CD4-positive, alpha-beta memory T cell (primary cell): ENCODE measurements at regions of chr14 and their contacts with region 1.

Region 1: GRCh38 chr14:104665657-104666522 is 23.5 kb upstream of the INF2 start:
- DNase-seq: peak; percentile 47 to 65 (median 59)
- H3K4me3 ChIP-seq: no peak overlapping the region
- H3K4me3 Mint-ChIP-seq: peak overlapping the region in 7 of 8 donors; percentile 29 to 76 (median 49)
- H3K27ac ChIP-seq: no peak overlapping the region
- H3K27ac Mint-ChIP-seq: peak overlapping the region in 4 of 7 donors; percentile 41 to 89 (median 63)
- H3K4me1 ChIP-seq: peaks cover 31% of the 10 kb centered on the region
- H3K4me1 Mint-ChIP-seq: peaks cover 16 to 36% (median 22%) of the 10 kb centered on the region in 4 donors
- H3K27me3 ChIP-seq: peaks cover 5% of the 10 kb centered on the region
- H3K27me3 Mint-ChIP-seq: peaks cover 10% of the 10 kb centered on the region in 2 donors

Region 2: DNA sequence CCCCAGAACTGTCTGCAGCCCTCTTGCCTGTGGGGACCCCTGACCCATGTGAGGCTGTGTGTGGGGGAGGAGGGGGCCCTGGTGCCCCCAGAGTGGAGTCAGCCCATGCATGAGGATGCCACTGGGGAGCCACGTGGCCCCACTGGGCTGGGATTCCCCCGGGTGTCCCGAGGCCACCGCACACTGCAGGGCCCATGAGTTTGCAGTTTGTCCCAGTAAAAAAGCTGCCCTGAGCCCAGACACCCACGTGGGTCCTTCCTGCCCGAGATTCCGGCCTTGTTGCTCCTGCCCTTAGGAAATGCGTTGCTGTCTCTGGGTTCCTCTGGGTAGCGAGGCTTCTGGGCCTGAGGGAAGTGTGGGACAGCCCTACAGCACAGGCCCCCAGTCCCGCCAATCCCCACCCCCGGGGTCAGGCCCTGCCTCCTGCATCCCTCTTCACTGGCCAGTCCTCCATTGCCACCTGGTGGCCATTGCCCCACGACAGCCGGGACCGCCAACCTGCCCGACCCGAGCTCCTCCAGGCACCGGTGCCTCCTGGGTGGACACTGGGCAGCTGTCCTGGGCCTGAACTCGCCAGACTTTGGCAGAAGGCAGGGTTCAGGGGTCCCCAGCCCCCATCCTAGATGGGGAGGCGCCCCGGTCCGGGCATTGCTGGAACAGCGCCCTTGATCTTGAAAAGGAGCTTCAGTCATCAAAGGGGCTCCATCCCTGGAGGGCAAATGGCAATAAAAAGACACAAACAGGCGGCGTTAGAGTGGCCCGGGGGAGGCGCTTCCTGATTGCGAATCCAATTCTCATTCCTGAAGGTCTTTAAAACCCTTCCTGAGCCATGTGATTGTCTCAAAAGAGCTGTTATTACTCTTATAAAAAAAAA is 101.9 kb before region 1 on chr14:
- CTCF ChIA-PET with region 1: no interaction called
- POLR2A ChIA-PET with region 1: no interaction called
- intact Hi-C with region 1: no loop called
- DNase-seq: peak; percentile 57 to 64 (median 60)
- H3K4me3 ChIP-seq: no peak overlapping the region
- H3K4me3 Mint-ChIP-seq: peak overlapping the region in 1 of 8 donors; percentile 45
- H3K27ac ChIP-seq: no peak overlapping the region
- H3K27ac Mint-ChIP-seq: no peak overlapping the region
- H3K4me1 ChIP-seq: no peaks in the 10 kb centered on the region
- H3K4me1 Mint-ChIP-seq: peaks cover 0 to 2% (median 0%) of the 10 kb centered on the region in 4 donors
- H3K27me3 ChIP-seq: no peaks in the 10 kb centered on the region
- H3K27me3 Mint-ChIP-seq: peaks cover 12 to 14% of the 10 kb centered on the region in 2 donors

Region 3: DNA sequence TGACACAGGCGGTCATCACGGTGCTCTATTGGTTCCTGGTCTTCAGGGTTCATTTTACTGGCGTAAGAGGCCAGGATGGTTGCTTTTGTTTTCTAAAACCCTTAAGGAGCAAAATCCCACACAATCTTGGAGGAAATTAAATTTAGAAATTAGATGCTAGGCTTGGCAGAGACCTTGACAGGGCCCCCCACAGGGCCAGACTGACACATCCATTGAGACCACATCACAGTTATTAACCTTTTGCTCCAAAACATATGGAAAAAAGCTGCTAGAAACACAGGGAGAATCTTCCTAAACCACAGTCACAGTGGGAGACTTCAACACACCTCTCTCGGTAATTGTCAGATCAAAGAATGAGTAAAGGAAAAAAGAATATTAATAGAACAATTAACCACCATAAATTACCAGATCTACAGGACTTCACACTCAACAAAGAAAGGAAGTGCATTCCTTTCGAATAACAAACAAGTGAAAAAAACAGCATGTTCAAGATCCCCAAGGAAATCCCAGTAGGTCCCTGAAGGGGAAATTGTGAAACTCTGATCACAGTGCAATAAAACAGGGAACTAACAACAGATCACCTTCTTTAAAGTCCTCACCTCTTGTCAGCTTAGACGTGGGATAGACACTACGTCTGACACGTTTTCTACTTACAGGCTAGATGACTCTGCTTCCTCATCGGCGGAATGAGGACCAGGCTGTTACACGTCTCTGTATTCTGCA is 21.1 kb before region 1 on chr14:
- CTCF ChIA-PET with region 1: no interaction called
- POLR2A ChIA-PET with region 1: no interaction called
- intact Hi-C with region 1: no loop called
- DNase-seq: no peak
- H3K4me3 ChIP-seq: no peak overlapping the region
- H3K4me3 Mint-ChIP-seq: no peak overlapping the region
- H3K27ac ChIP-seq: no peak overlapping the region
- H3K27ac Mint-ChIP-seq: no peak overlapping the region
- H3K4me1 ChIP-seq: peaks cover under 1% of the 10 kb centered on the region
- H3K4me1 Mint-ChIP-seq: peaks cover 0 to 2% (median 0%) of the 10 kb centered on the region in 4 donors
- H3K27me3 ChIP-seq: no peaks in the 10 kb centered on the region
- H3K27me3 Mint-ChIP-seq: peaks cover 8 to 13% of the 10 kb centered on the region in 2 donors

Region 4: DNA sequence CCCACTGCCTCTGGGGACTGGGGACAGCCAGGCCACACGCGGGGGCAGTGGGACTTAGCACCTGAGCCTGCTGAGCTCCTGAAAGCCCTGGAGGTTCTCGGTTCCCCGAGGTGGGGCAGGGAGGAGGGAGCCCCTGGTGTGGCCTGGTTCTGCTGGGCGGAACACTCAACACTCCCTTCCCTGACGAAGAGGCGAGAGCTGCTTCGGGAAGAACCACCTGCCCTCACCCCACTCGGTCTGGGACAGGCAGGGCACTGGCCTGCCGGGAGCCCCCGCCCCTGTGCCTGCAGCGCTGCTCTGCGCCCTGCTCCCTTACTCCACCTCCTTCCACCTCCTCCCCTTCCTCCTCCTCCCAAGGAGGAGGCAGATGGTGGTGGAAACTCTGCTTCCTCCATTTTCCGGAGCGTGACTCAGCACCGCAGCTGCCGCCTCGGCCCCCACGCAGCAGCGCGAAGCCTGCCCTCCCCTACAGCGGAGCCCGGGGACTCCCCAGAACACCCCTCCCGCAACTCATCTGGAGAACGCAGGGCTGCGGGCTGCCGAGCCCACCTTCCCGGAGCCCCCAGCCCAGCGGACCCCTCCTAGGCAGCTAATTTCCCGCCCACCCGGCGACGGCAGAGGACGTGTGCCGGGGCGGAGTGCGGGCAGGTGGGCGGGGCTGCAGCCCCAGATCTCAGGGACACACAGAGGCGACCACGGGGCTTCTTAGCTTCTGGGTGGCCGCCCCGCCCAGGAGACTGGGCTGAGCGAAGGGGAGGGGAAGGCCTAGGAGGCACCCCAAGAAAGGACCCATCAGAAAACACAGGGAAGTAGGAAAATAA is 11.8 kb after region 1 on chr14:
- CTCF ChIA-PET with region 1: interaction called, 22 read pairs
- POLR2A ChIA-PET with region 1: interaction called, 21 read pairs
- intact Hi-C with region 1: no loop called
- DNase-seq: peak; percentile 49 to 82 (median 60)
- H3K4me3 ChIP-seq: peak overlapping the region; percentile 57 to 63
- H3K4me3 Mint-ChIP-seq: peak overlapping the region; percentile 76 to 87 (median 81)
- H3K27ac ChIP-seq: peak overlapping the region; percentile 27
- H3K27ac Mint-ChIP-seq: peak overlapping the region in 6 of 7 donors; percentile 64 to 83 (median 74)
- H3K4me1 ChIP-seq: peaks cover 16% of the 10 kb centered on the region
- H3K4me1 Mint-ChIP-seq: peaks cover 0 to 16% (median 4%) of the 10 kb centered on the region in 4 donors
- H3K27me3 ChIP-seq: no peaks in the 10 kb centered on the region
- H3K27me3 Mint-ChIP-seq: peaks cover 0 to 2% of the 10 kb centered on the region in 2 donors

Region 5: GRCh38 chr14:104689109-104689880 is 23.4 kb after region 1 on chr14 and contains the start of gene INF2:
- CTCF ChIA-PET with region 1: interaction called, 11 read pairs
- POLR2A ChIA-PET with region 1: interaction called, 10 read pairs
- intact Hi-C with region 1: loop called (anchors 1 kb)
- DNase-seq: peak; percentile 35 to 57 (median 45)
- H3K4me3 ChIP-seq: peak within 1 kb of the TSS; percentile 54 to 57
- H3K4me3 Mint-ChIP-seq: peak within 1 kb of the TSS; percentile 54 to 84 (median 82)
- H3K27ac ChIP-seq: peak within 1 kb of the TSS; percentile 59
- H3K27ac Mint-ChIP-seq: peak within 1 kb of the TSS in 6 of 7 donors; percentile 26 to 66 (median 44)
- H3K4me1 ChIP-seq: peaks cover 79% of the 10 kb centered on the region
- H3K4me1 Mint-ChIP-seq: peaks cover 29 to 68% (median 48%) of the 10 kb centered on the region in 4 donors
- H3K27me3 ChIP-seq: no peaks in the 10 kb centered on the region
- H3K27me3 Mint-ChIP-seq: no peaks in the 10 kb centered on the region
- total RNA-seq, gene INF2: 93.1 to 96.8 TPM

Region 6: GRCh38 chr14:104694991-104695659 is 29.2 kb after region 1 on chr14:
- CTCF ChIA-PET with region 1: interaction called, 11 read pairs
- POLR2A ChIA-PET with region 1: interaction called, 10 read pairs
- intact Hi-C with region 1: no loop called
- DNase-seq: peak; percentile 36 to 82 (median 66)
- H3K4me3 ChIP-seq: peak overlapping the region in 1 of 2 donors; percentile 44
- H3K4me3 Mint-ChIP-seq: peak overlapping the region; percentile 48 to 82 (median 71)
- H3K27ac ChIP-seq: peak overlapping the region; percentile 62
- H3K27ac Mint-ChIP-seq: peak overlapping the region; percentile 83 to 97 (median 91)
- H3K4me1 ChIP-seq: peaks cover 62% of the 10 kb centered on the region
- H3K4me1 Mint-ChIP-seq: peaks cover 19 to 50% (median 37%) of the 10 kb centered on the region in 4 donors
- H3K27me3 ChIP-seq: no peaks in the 10 kb centered on the region
- H3K27me3 Mint-ChIP-seq: no peaks in the 10 kb centered on the region

Region 7: GRCh38 chr14:104708606-104709268 is 42.8 kb after region 1 on chr14:
- CTCF ChIA-PET with region 1: interaction called, 36 read pairs
- POLR2A ChIA-PET with region 1: interaction called, 11 read pairs
- intact Hi-C with region 1: loop called (anchors 1 kb)
- DNase-seq: peak; percentile 62 to 76 (median 67)
- H3K4me3 ChIP-seq: no peak overlapping the region
- H3K4me3 Mint-ChIP-seq: no peak overlapping the region
- H3K27ac ChIP-seq: no peak overlapping the region
- H3K27ac Mint-ChIP-seq: peak overlapping the region in 4 of 7 donors; percentile 18 to 74 (median 34)
- H3K4me1 ChIP-seq: peaks cover 5% of the 10 kb centered on the region
- H3K4me1 Mint-ChIP-seq: peaks cover 1 to 5% (median 3%) of the 10 kb centered on the region in 4 donors
- H3K27me3 ChIP-seq: no peaks in the 10 kb centered on the region
- H3K27me3 Mint-ChIP-seq: no peaks in the 10 kb centered on the region